GM10248 (cell line): ENCODE measurements at regions of chr11 and their contacts with region 1.

Region 1: GRCh38 chr11:20355221-20356219 is 8.0 kb upstream of the HTATIP2 start:
- DNase-seq: peak; percentile 24
- CTCF ChIP-seq: peak; percentile 48

Region 2: GRCh38 chr11:20226933-20227332 is 128.6 kb before region 1 on chr11:
- CTCF ChIA-PET with region 1: no interaction called
- POLR2A ChIA-PET with region 1: no interaction called
- DNase-seq: no peak
- CTCF ChIP-seq: no peak

Region 3: DNA sequence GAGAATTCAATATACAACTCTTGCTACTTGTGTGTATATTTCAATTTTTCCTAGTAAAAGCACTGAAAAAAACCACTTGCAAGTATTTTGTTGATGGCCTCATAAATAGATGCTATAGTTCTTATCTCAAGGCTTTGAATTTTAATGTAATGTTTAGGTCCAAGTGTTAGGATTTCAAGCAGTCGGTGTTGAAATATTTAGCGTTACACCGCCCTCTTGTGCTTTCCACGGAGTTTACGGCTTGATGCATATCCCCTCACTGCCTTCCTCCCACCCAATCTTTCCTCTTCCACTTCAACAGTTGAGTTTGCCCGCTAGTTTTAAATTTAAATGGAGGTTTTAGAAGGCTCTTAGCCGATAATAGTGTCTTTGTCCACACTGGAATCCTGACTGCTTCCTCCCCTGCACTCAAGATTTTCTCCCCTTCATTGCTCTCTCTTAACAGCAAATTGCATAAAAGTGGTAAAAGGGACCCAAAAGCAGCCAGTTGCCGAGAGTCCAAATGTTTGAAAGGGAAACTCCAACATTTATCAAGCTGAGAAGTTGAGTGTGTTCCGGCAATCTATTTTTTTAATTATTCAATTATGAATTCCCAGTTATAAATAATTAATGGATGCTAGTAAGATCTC is 17.9 kb before region 1 on chr11:
- CTCF ChIA-PET with region 1: interaction called, 55 read pairs
- POLR2A ChIA-PET with region 1: no interaction called
- DNase-seq: peak; percentile 24
- CTCF ChIP-seq: peak; percentile 42